GM10248 (cell line): ENCODE measurements at regions of chr17 and their contacts with region 1.

Region 1: DNA sequence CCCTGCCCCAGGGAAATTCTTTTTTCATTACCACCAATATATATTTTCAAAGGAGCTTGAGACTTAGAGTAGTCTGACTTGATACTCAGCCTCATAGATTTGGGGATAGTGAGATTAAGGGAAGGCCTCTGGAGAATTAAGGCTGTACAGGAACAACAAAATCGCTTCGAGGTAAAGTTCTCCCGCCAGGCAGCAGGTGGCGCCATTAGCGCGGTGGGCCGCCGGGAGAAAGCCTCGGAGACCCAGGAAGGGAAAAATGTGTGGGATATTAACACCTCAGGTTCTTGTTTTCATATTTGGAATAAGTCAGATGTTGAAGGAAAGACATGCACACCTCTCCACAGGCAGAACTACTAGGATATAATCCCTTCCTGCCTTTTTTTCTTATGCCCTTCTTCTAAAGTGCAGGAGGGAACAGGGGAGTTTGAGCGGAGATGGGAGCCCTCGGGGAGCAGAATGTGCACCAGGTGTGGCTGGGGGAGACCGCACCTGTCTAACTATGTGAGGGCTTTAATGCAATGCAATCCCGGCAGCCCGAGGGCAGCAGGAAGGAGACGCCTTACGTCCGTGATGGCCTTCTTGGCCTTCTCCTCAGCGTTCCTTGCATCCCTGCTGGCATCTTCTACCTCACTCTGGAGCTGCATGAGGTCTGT is 25.9 kb downstream of the MYH3 start:
- DNase-seq: peak; percentile 53
- CTCF ChIP-seq: peak; percentile 83

Region 2: GRCh38 chr17:10458701-10459100 is 172.5 kb before region 1 on chr17:
- CTCF ChIA-PET with region 1: no interaction called
- POLR2A ChIA-PET with region 1: no interaction called
- DNase-seq: no peak
- CTCF ChIP-seq: no peak

Region 3: DNA sequence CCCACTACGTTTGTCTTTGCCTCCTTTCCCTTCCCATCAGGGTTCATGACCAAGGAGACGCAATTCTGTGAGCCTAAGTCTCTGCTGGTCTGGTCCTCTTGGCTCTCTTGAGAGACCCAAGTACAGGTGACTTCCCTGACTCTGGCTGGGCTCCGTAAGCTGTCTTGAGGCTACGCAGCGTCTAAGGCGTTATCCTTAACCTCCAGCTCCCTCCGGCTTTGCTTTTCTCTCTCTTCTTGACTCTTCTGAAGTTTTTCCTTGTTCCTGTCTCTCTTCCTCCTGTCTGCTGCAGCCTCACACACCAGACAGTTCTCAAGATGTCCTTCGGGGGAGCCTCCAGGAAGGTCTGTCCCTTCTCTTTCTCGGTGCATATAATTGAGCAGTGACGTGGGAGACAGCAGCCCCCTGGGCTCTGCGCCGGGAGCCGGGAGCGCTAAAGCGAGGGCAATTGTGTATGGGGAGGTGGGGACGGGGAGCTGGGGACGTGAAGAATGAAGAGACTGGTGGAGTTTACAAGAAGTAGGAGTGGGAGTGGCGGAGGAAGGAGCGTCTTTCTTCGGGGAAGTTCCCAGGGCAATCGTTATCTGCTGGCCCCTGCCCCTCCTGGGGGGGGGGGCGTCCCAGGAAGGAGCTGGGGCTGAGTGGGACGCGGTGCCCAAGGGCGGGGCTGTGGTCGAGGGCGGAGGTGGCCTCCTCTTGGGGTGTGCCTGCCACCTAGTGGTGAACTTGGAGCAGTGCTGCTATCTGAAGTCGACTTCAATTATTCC is 213.6 kb after region 1 on chr17:
- CTCF ChIA-PET with region 1: interaction called, 36 read pairs
- POLR2A ChIA-PET with region 1: no interaction called
- DNase-seq: peak; percentile 86
- CTCF ChIP-seq: peak; percentile 91